AG04450 (cell line): ENCODE measurements at regions of chr13 and their contacts with region 1.

Region 1: DNA sequence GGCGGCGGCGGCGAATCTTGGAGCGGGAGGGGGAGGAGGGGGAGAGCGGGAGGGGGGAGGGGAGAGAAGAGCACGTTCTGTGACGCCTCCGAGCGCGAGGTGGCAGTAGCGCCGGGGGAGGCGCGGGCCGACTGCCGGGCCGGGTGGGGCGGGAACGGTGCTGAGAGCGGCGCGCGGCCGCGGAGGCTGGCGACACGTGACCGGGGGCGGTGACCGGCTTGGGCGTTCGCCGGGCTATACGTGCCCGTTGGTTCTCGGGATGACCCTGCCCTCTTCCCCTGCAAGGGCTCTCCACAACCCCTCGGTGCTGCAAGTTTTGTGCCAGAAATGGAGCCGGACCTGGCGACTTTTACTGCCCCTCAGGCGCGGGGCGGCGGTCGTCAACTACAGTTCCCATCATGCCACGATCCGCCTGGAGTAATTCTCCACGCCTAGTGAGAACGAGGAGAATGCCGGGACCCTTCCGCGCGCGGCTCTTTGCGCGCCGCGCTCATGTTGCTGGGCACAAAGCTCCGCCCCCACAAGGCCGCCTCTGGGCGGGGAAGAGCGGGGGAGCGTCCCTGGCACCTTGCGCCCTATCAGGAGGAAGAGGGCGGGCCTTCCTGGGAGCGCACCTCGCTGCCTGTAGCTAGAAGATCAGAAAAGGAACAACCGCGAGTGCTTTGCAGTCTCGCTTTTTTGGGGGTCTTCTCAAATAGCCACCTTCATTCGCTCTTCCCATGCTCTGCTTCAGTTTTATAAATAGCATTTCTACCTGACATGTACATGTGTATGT is at the start of gene KPNA3:
- DNase-seq: peak; percentile 93
- H3K4me3 ChIP-seq: peak within 1 kb of the TSS; percentile 88
- H3K27ac ChIP-seq: peak within 1 kb of the TSS; percentile 91
- H3K27me3 ChIP-seq: peaks cover 2% of the 10 kb centered on the region
- CTCF ChIP-seq: no peak
- polyA plus RNA-seq, gene KPNA3: 41.4 and 50.7 TPM in 2 replicates

Region 2: DNA sequence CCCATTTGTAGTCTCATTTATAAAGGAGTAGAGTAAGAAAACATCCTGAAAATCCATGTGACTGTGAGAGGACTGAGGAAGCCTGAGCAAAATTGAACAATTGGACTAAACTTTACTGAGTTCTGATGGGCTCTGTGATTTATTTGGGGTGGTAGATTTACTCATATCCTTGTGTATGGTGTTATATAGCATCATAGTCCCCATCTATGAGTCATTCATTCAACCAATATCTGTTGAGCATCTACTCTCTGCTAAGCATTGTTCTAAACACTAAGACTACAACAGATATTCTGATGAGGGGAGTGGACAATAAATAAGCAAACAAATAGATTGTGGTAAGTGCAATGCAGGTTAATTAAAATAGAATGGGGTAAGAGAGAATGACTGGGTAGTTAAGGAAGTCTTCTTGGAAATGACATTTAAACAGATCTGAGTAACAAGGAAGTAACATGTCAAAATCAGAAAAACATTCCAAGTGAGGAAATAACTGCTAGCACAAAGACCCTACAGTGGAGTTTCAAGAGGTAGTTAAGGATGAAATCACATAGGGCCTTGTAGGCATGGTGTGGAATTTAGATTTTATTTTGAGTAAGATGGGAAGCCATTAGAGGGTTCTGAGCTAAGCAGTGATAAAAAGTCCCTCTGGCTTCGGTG is 608.9 kb before region 1 on chr13:
- CTCF ChIA-PET with region 1: no interaction called
- POLR2A ChIA-PET with region 1: interaction called, 10 read pairs
- DNase-seq: no peak
- H3K4me3 ChIP-seq: no peak overlapping the region
- H3K27ac ChIP-seq: no peak overlapping the region
- H3K27me3 ChIP-seq: no peaks in the 10 kb centered on the region
- CTCF ChIP-seq: no peak

Region 3: DNA sequence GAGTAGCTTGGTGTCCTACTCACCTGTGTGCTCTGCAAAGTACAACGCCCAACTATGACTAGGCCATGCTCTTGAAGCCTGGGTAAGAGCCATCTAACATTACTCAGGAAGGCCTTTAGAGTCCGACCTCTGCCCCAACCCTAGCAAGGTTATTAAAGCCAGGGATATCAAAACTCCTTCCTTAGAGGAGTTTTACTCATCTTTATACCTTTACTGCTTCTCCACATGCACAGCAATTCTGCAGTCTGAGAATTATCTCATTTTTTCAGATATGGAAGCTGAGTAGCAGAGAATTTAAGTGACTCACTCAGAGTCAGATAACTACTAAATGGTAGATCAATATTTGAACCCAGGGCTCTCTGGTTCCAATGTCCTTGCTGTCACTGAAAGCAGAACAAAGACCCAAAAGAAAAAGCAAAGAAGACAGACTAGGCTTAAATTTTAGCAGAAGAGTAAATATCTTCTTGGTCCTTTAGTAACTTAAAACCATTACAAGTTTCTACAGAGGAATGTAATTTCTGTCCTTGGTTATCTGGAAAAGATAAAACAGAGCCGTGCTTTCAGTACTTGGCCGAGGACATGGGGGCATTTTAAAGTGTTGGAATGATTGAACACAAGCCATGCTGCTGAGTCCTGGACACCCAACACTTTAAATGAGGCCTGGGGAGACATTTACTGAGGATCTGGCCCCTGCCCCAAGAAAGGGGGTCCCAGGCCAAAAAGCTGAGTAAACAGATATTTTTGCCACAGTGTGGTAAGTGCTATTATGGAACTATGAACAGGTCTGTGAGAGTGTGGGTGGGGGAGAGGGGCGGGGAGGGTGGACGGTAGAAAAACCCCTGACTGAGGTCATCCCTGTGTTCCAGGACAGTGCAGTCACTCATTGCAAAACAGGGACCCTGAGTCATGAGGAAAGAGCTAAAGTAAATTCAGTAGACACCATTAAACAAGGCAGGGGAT is 18.1 kb after region 1 on chr13:
- CTCF ChIA-PET with region 1: no interaction called
- POLR2A ChIA-PET with region 1: interaction called, 12 read pairs
- DNase-seq: no peak
- H3K4me3 ChIP-seq: no peak overlapping the region
- H3K27ac ChIP-seq: peak overlapping the region; percentile 58
- H3K27me3 ChIP-seq: no peaks in the 10 kb centered on the region
- CTCF ChIP-seq: no peak

Region 4: GRCh38 chr13:49858183-49858856 is 65.6 kb after region 1 on chr13:
- CTCF ChIA-PET with region 1: interaction called, 4 read pairs
- POLR2A ChIA-PET with region 1: interaction called, 11 read pairs
- DNase-seq: peak; percentile 96
- H3K4me3 ChIP-seq: no peak overlapping the region
- H3K27ac ChIP-seq: peak overlapping the region; percentile 92
- H3K27me3 ChIP-seq: no peaks in the 10 kb centered on the region
- CTCF ChIP-seq: no peak